GM12878 (cell line): ENCODE measurements at regions of chr12 and their contacts with region 1.

Region 1: GRCh38 chr12:40168868-40169267 is 55.9 kb upstream of the LRRK2 start:
- DNase-seq: peak; percentile 55
- ATAC-seq: peak; percentile 94
- H3K4me3 ChIP-seq: 0 out of 2 replicates have a peak overlapping the region, but pooled peaks have one; percentile 9
- H3K27ac ChIP-seq: peak overlapping the region; percentile 56; the same call in 1 of the 2 replicates
- H3K4me1 ChIP-seq: peaks cover 10% of the 10 kb centered on the region
- H3K27me3 ChIP-seq: peaks cover 0 to 2% of the 10 kb centered on the region in 2 experiments; a peak in 1 of 4 replicates
- CTCF ChIP-seq: no peak
- EP300 ChIP-seq: peak; percentile 66 to 91
- POLR2A ChIP-seq: no peak
- RAD21 ChIP-seq: no peak

Region 2: GRCh38 chr12:40202095-40203059 is 33.5 kb after region 1 on chr12:
- CTCF ChIA-PET with region 1: interaction called, 5 read pairs
- POLR2A ChIA-PET with region 1: interaction called, 4 read pairs
- RAD21 ChIA-PET with region 1: interaction called, 16 read pairs
- SMC1A ChIA-PET with region 1: interaction called, 8 read pairs
- in situ Hi-C with region 1: no loop called
- intact Hi-C with region 1: loop called (anchors 5 kb)
- DNase-seq: no peak
- ATAC-seq: peak; percentile 79
- H3K4me3 ChIP-seq: no peak overlapping the region
- H3K27ac ChIP-seq: no peak overlapping the region
- H3K4me1 ChIP-seq: no peaks in the 10 kb centered on the region
- H3K27me3 ChIP-seq: no peaks in the 10 kb centered on the region
- CTCF ChIP-seq: no peak
- EP300 ChIP-seq: peak in 1 of 2 experiments; percentile 44; a peak in 1 of 4 replicates
- POLR2A ChIP-seq: no peak
- RAD21 ChIP-seq: no peak

Region 3: DNA sequence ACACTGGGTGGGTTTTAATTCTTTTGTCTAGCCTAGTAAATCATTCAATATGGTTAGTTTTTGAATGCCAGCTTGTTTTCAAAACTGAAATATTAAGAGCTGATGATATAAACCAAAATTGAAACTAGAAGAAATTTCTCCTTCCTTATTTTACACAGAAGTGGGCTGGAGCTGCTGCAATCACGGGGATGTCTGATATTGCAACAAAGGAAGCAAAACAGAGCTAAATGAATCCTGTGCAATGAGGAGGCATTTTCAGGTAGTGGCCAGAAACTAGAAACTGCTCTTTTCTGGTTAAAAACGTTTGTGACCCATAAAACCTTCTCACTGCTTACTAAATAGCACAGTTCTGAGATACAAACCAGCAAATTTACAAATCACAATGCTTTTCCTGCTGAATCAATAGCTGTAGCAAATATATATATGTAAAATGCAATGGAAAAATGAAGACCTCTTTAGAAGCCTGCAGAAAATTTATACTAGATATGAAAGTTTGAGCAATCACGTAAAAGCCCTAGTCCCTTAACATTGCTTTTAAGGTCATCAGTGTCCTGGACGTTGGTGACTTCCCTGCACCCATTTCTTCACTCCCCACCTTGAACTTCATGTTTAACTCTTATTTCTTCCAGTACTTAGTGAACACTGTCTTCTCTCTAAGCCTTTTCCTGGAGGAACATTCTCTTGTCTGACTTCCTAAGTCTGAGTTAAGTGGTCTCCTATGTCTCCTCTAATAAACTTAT is 40.0 kb after region 1 on chr12:
- CTCF ChIA-PET with region 1: interaction called, 4 read pairs
- POLR2A ChIA-PET with region 1: interaction called, 4 read pairs
- RAD21 ChIA-PET with region 1: interaction called, 7 read pairs
- SMC1A ChIA-PET with region 1: interaction called, 8 read pairs
- in situ Hi-C with region 1: no loop called
- intact Hi-C with region 1: loop called (anchors 5 kb)
- DNase-seq: no peak
- ATAC-seq: peak; percentile 94
- H3K4me3 ChIP-seq: no peak overlapping the region
- H3K27ac ChIP-seq: no peak overlapping the region
- H3K4me1 ChIP-seq: peaks cover 8% of the 10 kb centered on the region
- H3K27me3 ChIP-seq: no peaks in the 10 kb centered on the region
- CTCF ChIP-seq: no peak
- EP300 ChIP-seq: no peak
- POLR2A ChIP-seq: no peak
- RAD21 ChIP-seq: no peak